ENCODE measurements at regions of chr4 and their contacts with region 1.

Region 1: GRCh38 chr4:122229857-122230256 is 77.7 kb downstream of the BLTP1 start:
- DNase-seq: no peak
- H3K4me3 ChIP-seq: no peak overlapping the region
- H3K27ac ChIP-seq: no peak overlapping the region
- H3K4me1 ChIP-seq: no peaks in the 10 kb centered on the region
- H3K27me3 ChIP-seq: no peaks in the 10 kb centered on the region
- CTCF ChIP-seq: no peak
- EP300 ChIP-seq: no peak
- POLR2A ChIP-seq: no peak

Region 2: DNA sequence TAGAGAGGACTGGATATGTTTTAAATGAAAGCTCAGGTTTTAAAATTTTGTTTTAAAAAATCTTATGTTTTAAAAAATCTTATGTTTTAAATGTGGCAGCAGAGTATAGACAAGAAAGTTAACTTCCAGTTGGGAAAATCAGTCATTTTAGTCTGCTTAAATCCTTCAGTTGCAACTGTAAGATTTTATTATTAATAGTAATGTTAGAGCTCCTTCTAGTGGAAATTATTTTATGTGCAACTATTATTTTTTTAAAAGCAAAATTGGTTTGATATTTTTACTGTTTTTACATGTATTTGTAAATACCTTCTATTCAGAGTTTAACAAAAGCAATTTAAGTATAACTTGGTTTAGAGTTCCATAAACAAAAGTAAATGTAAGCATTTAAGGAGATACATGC is 701.0 kb after region 1 on chr4:
- intact Hi-C with region 1: loop called in 1 of 4 experiments (anchors 10 kb)
- DNase-seq: no peak
- H3K4me3 ChIP-seq: no peak overlapping the region
- H3K27ac ChIP-seq: no peak overlapping the region
- H3K4me1 ChIP-seq: no peaks in the 10 kb centered on the region
- H3K27me3 ChIP-seq: no peaks in the 10 kb centered on the region
- CTCF ChIP-seq: peak in 2 of 3 donors; percentile 27 to 52
- EP300 ChIP-seq: no peak
- POLR2A ChIP-seq: no peak